Right ventricle myocardium inferior (tissue), 1 donor: ENCODE measurements at regions of chr3 and their contacts with region 1.

Region 1: DNA sequence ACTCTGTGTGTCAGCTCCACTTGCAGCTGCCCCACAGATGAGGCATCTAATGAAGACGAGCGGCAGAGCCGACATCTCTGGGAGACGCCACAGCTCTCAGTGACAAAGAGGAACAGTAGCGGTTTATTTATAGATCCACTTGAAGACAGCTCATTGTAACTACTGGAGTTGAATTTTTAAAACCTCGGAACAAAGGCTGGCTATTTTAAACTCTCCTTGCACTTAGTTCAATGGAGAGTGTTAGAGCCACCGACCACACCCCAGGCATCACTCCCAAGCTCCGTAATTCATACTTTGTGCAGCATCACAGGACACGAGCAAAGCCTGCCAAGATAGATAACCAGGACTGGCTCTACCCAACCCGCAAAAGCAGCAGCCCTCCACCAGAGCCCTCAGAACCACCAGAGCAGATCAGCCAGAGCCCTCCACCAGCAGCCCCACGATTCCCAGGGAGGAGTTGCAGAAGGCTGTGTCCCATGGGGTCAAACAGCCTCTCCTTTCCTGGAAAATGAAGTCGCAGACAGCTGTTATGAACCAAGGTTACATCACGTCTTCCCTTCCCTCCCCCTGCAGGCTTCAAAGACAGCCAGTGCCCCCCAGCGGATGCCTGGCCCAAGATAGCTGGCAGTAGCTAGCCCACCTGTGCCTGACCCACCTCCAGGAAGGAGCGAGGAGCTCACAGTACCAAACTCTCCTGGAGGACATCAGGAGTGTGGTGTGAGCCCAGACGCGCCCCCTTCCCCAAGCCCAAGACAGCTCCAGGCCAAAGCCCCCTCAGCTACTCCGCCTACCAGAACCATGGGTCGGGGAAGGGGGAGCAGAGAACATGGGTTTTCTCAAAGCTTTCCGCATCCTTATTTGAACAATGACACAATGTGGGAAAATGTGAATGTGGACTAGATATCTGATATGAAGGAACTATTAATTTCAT is 45.7 kb downstream of the POC1A start:
- DNase-seq: no peak
- ATAC-seq: peak; percentile 69

Region 2: DNA sequence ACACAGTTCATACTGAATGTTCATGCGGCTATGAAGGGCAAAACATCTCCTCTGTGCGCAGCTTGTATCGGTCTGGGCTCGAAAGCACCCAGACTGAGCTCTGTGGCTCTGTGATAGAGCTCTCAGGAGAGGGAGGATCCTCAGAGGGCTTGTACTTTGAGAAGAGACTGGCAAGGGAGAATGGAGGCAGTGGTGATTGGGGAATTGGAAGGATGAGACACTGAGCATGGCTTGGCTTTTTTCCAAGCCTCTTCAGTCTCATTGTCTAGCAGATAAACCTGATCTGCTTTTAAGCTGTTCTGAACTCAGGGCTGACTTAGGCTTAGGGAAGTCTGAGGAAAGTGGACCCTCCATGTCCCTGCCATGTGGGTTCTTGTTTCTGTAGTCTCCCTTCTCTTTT is 527.0 kb before region 1 on chr3:
- intact Hi-C with region 1: no loop called
- DNase-seq: no peak
- ATAC-seq: no peak

Region 3: GRCh38 chr3:51874889-51875288 is 233.7 kb before region 1 on chr3:
- intact Hi-C with region 1: no loop called
- DNase-seq: no peak
- ATAC-seq: no peak

Region 4: DNA sequence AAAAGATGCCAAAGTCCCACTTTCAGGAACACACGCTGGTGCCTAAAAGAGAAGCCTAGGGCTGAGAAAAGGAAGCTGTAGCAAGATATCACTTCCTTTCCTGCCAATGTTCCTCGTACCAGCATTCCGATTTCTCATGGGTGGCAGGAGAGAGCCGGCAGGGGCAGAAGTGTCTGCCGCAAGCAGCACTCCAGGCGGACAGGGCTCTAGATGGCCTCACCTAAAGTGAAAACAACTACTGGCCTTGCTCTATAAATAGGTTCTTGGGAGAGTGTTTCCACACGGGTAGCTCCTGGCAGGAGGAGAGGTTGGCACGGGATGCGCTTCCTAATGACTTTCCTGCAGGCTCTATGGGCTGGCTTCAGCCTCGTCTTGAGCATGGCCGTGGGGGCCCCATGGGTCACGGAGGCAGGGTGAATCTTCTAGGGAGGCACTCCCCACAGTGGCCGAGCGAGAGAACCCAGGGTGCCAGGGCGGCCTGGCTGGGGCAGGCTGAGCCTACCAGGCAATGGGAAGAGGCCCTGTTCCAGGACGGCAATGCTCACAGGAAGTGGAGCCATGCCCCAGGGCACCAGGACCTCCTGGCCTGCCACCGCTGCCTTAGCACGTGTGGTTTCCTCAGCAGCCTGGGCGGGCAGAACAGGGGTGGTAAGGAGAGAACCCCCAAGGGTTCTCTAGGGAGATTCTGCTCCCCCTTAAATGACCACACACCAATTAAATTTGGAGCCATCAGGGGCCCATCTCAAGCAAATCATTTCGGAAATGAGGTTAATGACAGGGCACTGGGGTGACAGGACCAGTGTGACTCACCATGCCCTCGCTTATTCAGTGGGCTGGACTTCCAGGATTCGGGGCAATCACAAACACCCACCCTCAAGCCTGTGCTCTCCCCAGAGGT is 37.6 kb before region 1 on chr3:
- intact Hi-C with region 1: loop called (anchors 2 kb)
- DNase-seq: no peak
- ATAC-seq: peak; percentile 84